ENCODE measurements at regions of chr6 and their contacts with region 1.

Region 1: DNA sequence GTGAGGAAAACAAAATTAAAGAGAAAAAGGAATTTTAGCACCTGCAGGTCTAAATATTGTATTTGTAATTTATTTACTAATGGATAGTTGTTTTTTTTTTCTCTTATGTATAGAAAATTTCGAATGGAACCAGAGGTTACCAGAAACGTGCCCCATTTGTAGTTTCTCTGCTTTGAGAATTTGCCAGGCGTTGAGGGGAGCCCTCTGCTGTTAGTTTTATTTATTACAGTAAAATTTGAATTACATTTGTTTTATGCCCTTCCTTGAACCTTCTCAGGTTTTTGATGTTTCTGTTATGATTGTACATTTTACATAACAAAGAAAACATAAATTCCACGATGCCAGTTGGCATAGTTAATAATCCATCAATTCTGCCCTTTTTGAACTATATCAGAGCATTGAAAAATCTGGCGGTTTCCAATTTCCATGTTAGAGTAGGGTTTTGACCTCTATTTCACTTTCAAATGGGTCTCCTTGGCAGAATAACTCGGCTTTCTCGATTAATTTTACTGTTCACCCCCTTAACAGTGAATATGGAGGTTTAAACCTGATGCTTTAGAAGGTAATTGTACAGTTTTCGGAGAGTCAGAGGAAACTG is 35.1 kb upstream of the RFPL4B start:
- DNase-seq: peak in 1 of 2 donors; percentile 56
- H3K4me3 ChIP-seq: no peak overlapping the region
- H3K27ac ChIP-seq: no peak overlapping the region
- H3K4me1 ChIP-seq: peaks cover 0 to 14% (median 7%) of the 10 kb centered on the region in 4 donors
- H3K27me3 ChIP-seq: no peaks in the 10 kb centered on the region
- CTCF ChIP-seq: peak in 5 of 7 experiments; percentile 40 to 63 (median 56)
- EP300 ChIP-seq: no peak
- POLR2A ChIP-seq: no peak

Region 2: GRCh38 chr6:112180095-112180820 is 131.8 kb before region 1 on chr6:
- intact Hi-C with region 1: loop called (anchors 5 kb)
- DNase-seq: peak in 1 of 2 donors; percentile 92
- H3K4me3 ChIP-seq: no peak overlapping the region
- H3K27ac ChIP-seq: peak overlapping the region in 1 of 5 donors; percentile 14
- H3K4me1 ChIP-seq: peaks cover 0 to 21% (median 9%) of the 10 kb centered on the region in 4 donors
- H3K27me3 ChIP-seq: peaks cover 0 to 2% (median 0%) of the 10 kb centered on the region in 3 donors
- CTCF ChIP-seq: peak in 5 of 7 experiments; percentile 29 to 70 (median 56)
- EP300 ChIP-seq: no peak
- POLR2A ChIP-seq: no peak

Region 3: DNA sequence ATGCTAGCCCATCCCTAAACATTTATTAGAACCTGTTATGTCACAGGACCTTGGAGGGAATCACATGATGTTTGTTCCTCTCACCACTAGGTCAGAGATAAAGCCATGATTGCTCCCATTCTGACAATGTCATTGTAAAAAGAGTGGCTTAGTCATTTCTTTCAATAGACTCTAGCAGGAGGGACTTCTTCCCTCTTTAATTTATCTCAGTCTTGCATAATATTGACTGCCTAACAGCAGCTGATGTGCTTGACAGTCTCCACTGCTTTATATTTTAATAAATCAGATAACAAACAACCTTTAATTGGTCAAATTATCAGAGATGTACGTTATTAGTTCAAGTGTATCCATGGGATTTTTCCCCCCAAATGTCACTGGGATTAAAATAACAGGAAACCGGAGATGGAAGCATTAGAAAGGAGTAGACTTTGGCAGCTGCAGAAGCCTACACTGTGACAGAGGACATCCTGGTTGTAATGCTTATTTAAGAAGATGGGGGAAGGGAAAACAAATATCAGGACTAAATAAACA is 97.2 kb before region 1 on chr6:
- intact Hi-C with region 1: no loop called
- DNase-seq: peak in 1 of 2 donors; percentile 34
- H3K4me3 ChIP-seq: no peak overlapping the region
- H3K27ac ChIP-seq: peak overlapping the region in 2 of 5 donors; percentile 39 to 47
- H3K4me1 ChIP-seq: peaks cover 0 to 42% (median 25%) of the 10 kb centered on the region in 4 donors
- H3K27me3 ChIP-seq: no peaks in the 10 kb centered on the region
- CTCF ChIP-seq: no peak
- EP300 ChIP-seq: no peak
- POLR2A ChIP-seq: no peak

Measured in stomach (tissue), 19 donors.